Sigmoid colon (tissue), 7 donors: ENCODE measurements at regions of chr1 and their contacts with region 1.

Region 1: DNA sequence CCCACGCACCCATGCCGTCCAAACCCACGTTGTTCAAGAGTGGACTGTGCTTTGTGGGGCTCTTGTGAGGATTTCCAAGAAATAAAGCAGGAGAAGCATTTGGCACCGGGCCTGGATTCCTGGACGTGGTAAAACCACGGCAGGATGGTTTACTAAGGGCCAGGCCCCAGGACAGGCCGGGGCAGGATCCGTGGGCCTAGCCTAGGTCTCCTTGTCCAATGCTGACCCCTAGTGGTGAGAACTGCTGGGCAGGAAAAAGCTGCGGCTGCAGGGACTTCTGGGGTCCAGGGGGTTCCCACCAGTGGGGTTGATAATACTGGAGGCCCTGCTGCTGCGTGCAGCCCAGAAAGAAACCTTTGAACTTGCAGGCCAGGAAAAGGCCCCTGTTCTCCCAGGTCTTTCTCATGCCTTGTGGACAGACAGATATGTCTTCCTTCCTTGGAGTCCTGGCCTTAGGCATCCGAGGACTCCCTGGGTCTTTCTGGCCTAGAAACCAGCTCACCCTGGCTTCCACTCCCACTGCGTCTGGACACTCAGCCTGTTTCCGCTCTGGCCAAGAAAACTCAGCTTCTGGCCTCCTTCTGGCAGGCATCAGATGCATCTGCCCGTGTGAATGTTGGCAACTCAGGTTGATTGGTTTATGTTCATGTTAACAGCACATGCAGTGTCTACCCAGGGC is 106.9 kb upstream of the TMEM51 start:
- DNase-seq: peak; percentile 86
- H3K4me3 ChIP-seq: no peak overlapping the region
- H3K27ac ChIP-seq: no peak overlapping the region
- H3K4me1 ChIP-seq: no peaks in the 10 kb centered on the region
- H3K27me3 ChIP-seq: no peaks in the 10 kb centered on the region
- CTCF ChIP-seq: peak; percentile 74 to 94 (median 84)
- EP300 ChIP-seq: no peak
- POLR2A ChIP-seq: no peak

Region 2: GRCh38 chr1:13662493-13662892 is 1384.1 kb before region 1 on chr1:
- intact Hi-C with region 1: loop called (anchors 10 kb)
- DNase-seq: peak; percentile 67
- H3K4me3 ChIP-seq: no peak overlapping the region
- H3K27ac ChIP-seq: peak overlapping the region in 3 of 4 donors; percentile 12 to 69 (median 34)
- H3K4me1 ChIP-seq: peaks cover 0 to 15% (median 4%) of the 10 kb centered on the region in 4 donors
- H3K27me3 ChIP-seq: no peaks in the 10 kb centered on the region
- CTCF ChIP-seq: no peak
- EP300 ChIP-seq: peak in 1 of 4 donors; percentile 32
- POLR2A ChIP-seq: no peak

Region 3: GRCh38 chr1:13960375-13960987 is 1086.1 kb before region 1 on chr1:
- intact Hi-C with region 1: loop called (anchors 5 kb)
- DNase-seq: peak; percentile 81
- H3K4me3 ChIP-seq: no peak overlapping the region
- H3K27ac ChIP-seq: no peak overlapping the region
- H3K4me1 ChIP-seq: no peaks in the 10 kb centered on the region
- H3K27me3 ChIP-seq: no peaks in the 10 kb centered on the region
- CTCF ChIP-seq: peak; percentile 77 to 94 (median 92)
- EP300 ChIP-seq: no peak
- POLR2A ChIP-seq: no peak

Region 4: GRCh38 chr1:14778898-14779865 is 267.4 kb before region 1 on chr1:
- intact Hi-C with region 1: loop called (anchors 10 kb)
- DNase-seq: no peak
- H3K4me3 ChIP-seq: no peak overlapping the region
- H3K27ac ChIP-seq: no peak overlapping the region
- H3K4me1 ChIP-seq: no peaks in the 10 kb centered on the region
- H3K27me3 ChIP-seq: no peaks in the 10 kb centered on the region
- CTCF ChIP-seq: peak in 2 of 4 experiments; percentile 32 to 50
- EP300 ChIP-seq: no peak
- POLR2A ChIP-seq: no peak

Region 5: GRCh38 chr1:14791654-14792053 is 255.0 kb before region 1 on chr1:
- intact Hi-C with region 1: no loop called
- DNase-seq: no peak
- H3K4me3 ChIP-seq: no peak overlapping the region
- H3K27ac ChIP-seq: no peak overlapping the region
- H3K4me1 ChIP-seq: no peaks in the 10 kb centered on the region
- H3K27me3 ChIP-seq: no peaks in the 10 kb centered on the region
- CTCF ChIP-seq: no peak
- EP300 ChIP-seq: no peak
- POLR2A ChIP-seq: no peak